Left colon (tissue), 2 donors: ENCODE measurements at regions of chr11 and their contacts with region 1.

Region 1: GRCh38 chr11:23103416-23103815 is 243.1 kb upstream of the CCDC179 start:
- DNase-seq: no peak
- ATAC-seq: no peak

Region 2: GRCh38 chr11:23166376-23166775 is 63.0 kb after region 1 on chr11:
- intact Hi-C with region 1: no loop called
- DNase-seq: no peak
- ATAC-seq: no peak

Region 3: DNA sequence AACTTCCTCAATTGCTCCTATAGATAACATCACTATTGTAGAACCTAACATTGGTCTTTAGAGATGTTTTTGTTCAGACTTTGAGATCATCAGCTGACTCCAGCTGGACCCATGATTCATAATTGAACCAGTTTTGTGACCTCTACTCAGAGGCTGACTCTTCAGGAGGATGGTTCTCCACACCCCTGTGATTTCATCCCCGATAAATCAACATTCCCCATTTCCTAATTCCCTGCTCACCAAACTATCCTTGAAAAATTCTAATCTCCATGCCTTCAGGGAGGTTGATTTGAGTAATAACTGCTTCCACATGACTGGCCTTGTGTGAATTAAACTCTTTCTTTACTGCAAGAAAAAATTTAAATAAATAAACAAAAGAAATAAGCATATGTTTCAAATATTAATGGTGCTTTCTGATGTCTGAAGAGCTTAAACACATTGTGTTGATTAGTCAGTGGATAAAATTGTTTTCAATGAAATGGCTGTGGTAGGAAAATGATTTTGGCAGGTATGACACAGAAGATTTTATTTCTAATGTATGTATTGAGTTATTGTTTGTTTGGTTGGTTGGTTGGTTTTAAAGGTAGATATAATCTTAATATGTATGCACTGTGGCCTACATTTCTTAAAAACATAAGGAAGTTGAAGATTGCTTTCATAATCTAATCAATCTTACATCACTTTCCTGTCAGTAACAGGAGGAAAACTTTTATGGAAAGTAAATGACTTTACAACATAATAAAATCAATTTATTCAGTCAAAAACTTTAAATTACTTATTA is 184.8 kb after region 1 on chr11:
- intact Hi-C with region 1: no loop called
- DNase-seq: no peak
- ATAC-seq: no peak

Region 4: DNA sequence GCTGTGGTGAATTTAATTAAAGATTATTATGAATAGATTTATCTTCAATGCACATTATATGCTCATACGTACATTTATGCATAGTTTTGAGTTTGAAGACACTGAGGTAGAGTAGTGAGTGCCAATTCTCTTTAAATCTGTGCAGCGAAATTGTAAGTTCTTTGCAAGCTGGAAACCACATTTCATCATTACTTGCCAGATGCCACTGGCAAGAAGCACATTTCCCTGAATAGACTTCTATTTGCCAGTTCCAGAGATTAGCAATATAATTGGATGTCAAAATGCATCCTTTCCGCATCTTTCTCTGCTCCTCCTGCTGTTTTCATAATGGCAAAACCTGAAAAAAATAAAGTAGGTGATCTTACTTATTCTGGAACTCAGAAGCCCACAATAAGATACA is 1841.5 kb after region 1 on chr11:
- intact Hi-C with region 1: loop called in 1 of 2 experiments (anchors 10 kb)
- DNase-seq: no peak
- ATAC-seq: no peak